CD4-positive, alpha-beta T cell (primary cell): ENCODE measurements at regions of chr4 and their contacts with region 1.

Region 1: GRCh38 chr4:47914220-47914925 is at the start of gene NFXL1:
- DNase-seq: peak; percentile 92 to 97 (median 95)
- ATAC-seq: peak; percentile 95
- H3K4me3 ChIP-seq: peak within 1 kb of the TSS; percentile 88
- H3K4me3 Mint-ChIP-seq: peak within 1 kb of the TSS; percentile 96
- H3K27ac ChIP-seq: peak within 1 kb of the TSS; percentile 62 to 67
- H3K27ac Mint-ChIP-seq: peak within 1 kb of the TSS; percentile 95
- H3K4me1 ChIP-seq: peaks cover 14% of the 10 kb centered on the region
- H3K4me1 Mint-ChIP-seq: peaks cover 47% of the 10 kb centered on the region
- H3K27me3 ChIP-seq: no peaks in the 10 kb centered on the region
- H3K27me3 Mint-ChIP-seq: no peaks in the 10 kb centered on the region
- CTCF ChIP-seq: no peak
- total RNA-seq, gene NFXL1: 9.0 to 9.9 TPM

Region 2: GRCh38 chr4:47463235-47463956 is 451.0 kb before region 1 on chr4 and contains the start of gene COMMD8:
- CTCF ChIA-PET with region 1: no interaction called
- POLR2A ChIA-PET with region 1: interaction called, 6 read pairs
- intact Hi-C with region 1: loop called in 1 of 2 experiments (anchors 2 kb)
- DNase-seq: peak; percentile 93 to 99 (median 96)
- ATAC-seq: peak; percentile 89
- H3K4me3 ChIP-seq: peak within 1 kb of the TSS; percentile 86
- H3K4me3 Mint-ChIP-seq: peak within 1 kb of the TSS; percentile 93
- H3K27ac ChIP-seq: peak within 1 kb of the TSS; percentile 43 to 63
- H3K27ac Mint-ChIP-seq: peak within 1 kb of the TSS; percentile 83
- H3K4me1 ChIP-seq: peaks cover 16% of the 10 kb centered on the region
- H3K4me1 Mint-ChIP-seq: peaks cover 51% of the 10 kb centered on the region
- H3K27me3 ChIP-seq: no peaks in the 10 kb centered on the region
- H3K27me3 Mint-ChIP-seq: no peaks in the 10 kb centered on the region
- CTCF ChIP-seq: no peak
- total RNA-seq, gene COMMD8: 4.4 to 5.4 TPM

Region 3: DNA sequence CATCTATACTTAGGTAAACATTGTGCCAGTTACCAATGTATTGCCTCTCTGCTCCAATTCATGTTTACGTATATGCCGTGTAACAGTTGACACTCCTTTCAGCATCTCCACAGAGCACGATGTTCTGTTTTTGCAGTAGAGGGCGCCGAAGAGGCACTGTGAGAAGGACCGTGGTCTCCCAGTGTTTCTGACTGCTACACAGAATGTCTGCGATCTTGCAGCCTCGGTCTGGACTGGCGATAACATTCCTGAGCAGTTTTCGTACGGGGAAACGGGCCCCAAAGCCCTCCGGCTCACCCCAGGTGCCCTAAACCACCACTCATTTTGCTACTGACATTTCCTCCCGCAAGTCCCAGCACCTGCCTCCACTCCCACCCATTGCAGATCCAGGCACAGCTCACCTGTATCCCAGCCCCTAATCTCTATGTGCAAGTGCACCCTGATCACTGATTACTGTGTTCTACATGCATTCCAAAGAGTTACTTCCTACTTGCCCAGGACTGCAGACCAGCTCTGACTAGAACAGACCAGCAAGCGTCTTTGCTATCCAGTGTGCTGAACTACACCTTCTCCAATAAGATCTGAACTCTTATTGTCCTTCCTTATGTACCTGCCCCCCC is 12.4 kb after region 1 on chr4:
- CTCF ChIA-PET with region 1: no interaction called
- POLR2A ChIA-PET with region 1: no interaction called
- intact Hi-C with region 1: no loop called
- DNase-seq: peak; percentile 22 to 72 (median 34)
- ATAC-seq: peak; percentile 98
- H3K4me3 ChIP-seq: no peak overlapping the region
- H3K4me3 Mint-ChIP-seq: peak overlapping the region; percentile 8
- H3K27ac ChIP-seq: no peak overlapping the region
- H3K27ac Mint-ChIP-seq: no peak overlapping the region
- H3K4me1 ChIP-seq: peaks cover 5% of the 10 kb centered on the region
- H3K4me1 Mint-ChIP-seq: peaks cover 13% of the 10 kb centered on the region
- H3K27me3 ChIP-seq: no peaks in the 10 kb centered on the region
- H3K27me3 Mint-ChIP-seq: peaks cover 34% of the 10 kb centered on the region
- CTCF ChIP-seq: peak; percentile 82

Region 4: DNA sequence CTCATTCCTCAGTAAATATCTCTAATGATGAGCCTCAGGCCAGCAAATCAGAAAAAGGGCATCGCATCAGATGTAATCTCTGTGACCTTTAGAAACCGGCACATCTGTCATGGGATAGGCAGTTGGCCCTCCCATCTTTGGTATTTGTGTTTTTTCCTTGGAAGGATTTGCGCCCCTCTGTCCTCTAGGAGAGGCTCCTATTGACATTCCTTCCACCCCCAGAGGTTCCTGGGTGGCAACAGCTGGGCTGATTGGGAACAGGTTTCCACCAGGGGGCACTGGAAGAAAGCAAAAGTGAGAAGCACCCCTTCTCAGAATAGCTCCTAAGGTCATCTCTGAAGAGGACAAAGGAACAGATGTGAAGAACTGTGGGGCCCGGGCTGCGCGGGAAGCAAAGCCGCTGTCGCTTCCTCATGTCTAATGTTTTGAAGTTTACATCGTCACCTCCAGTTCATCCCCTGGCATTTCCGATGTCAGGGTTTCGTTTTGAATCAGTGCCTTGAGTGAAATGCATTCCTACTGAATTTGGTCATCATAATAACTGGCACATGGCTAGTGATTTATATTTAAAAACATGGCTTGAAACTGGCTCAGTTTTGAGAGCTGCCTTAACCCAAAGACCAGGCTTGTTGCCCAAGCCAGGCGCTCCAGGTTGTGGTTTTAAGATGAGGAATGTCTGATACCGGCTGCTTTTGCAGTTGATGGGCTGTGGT is 213.5 kb after region 1 on chr4:
- CTCF ChIA-PET with region 1: no interaction called
- POLR2A ChIA-PET with region 1: no interaction called
- intact Hi-C with region 1: loop called in 1 of 2 experiments (anchors 10 kb)
- DNase-seq: peak; percentile 46 to 83 (median 66)
- ATAC-seq: peak; percentile 78
- H3K4me3 ChIP-seq: peak overlapping the region; percentile 33
- H3K4me3 Mint-ChIP-seq: peak overlapping the region; percentile 86
- H3K27ac ChIP-seq: peak overlapping the region; percentile 70 to 80
- H3K27ac Mint-ChIP-seq: peak overlapping the region; percentile 88
- H3K4me1 ChIP-seq: peaks cover 78% of the 10 kb centered on the region
- H3K4me1 Mint-ChIP-seq: peaks cover 87% of the 10 kb centered on the region
- H3K27me3 ChIP-seq: no peaks in the 10 kb centered on the region
- H3K27me3 Mint-ChIP-seq: no peaks in the 10 kb centered on the region
- CTCF ChIP-seq: peak; percentile 61

Region 5: DNA sequence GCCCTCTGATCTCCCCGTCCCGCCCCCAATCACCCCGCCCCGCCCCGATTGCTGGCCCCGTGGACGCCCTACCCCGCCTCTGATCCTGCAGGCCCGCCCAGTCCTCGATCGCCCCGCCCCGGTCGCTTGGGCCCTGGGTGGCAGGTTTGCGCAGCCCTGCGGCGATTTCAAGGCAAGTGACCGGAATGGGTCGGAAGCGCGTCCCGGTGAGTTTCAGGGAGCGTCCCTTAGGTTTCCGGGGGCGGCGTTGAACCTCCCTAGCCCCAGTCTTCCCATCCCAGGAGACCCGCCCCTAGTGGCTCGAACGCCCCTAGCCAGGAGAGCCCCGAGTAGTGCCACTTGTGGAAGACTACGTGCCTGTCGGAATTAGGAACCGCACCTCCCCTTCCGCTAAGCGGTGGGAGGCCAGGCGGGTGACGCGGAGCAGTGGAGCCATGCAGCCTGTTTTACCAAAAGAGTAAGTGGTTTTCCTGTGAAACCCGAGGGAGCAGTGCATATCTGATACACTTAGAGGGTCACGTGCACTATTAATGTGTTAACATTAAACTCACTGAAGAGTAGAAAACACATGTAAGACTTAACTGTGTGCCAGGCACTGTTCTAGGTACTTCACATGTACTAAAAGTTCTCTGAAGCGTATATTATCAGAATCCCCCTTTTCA is 355.6 kb after region 1 on chr4:
- CTCF ChIA-PET with region 1: no interaction called
- POLR2A ChIA-PET with region 1: no interaction called
- intact Hi-C with region 1: loop called in 1 of 2 experiments (anchors 5 kb)
- DNase-seq: peak; percentile 73 to 91 (median 80)
- ATAC-seq: peak; percentile 87
- H3K4me3 ChIP-seq: peak overlapping the region; percentile 87
- H3K4me3 Mint-ChIP-seq: peak overlapping the region; percentile 98
- H3K27ac ChIP-seq: peak overlapping the region in 1 of 2 donors; percentile 55
- H3K27ac Mint-ChIP-seq: peak overlapping the region; percentile 79
- H3K4me1 ChIP-seq: peaks cover 19% of the 10 kb centered on the region
- H3K4me1 Mint-ChIP-seq: peaks cover 29% of the 10 kb centered on the region
- H3K27me3 ChIP-seq: no peaks in the 10 kb centered on the region
- H3K27me3 Mint-ChIP-seq: no peaks in the 10 kb centered on the region
- CTCF ChIP-seq: peak; percentile 46

Region 6: GRCh38 chr4:48830706-48831531 is 916.5 kb after region 1 on chr4 and contains the start of gene OCIAD1:
- CTCF ChIA-PET with region 1: no interaction called
- POLR2A ChIA-PET with region 1: no interaction called
- intact Hi-C with region 1: loop called (anchors 10 kb)
- DNase-seq: peak; percentile 82 to 100 (median 91)
- ATAC-seq: peak; percentile 94
- H3K4me3 ChIP-seq: peak within 1 kb of the TSS; percentile 68
- H3K4me3 Mint-ChIP-seq: peak within 1 kb of the TSS; percentile 100
- H3K27ac ChIP-seq: peak within 1 kb of the TSS; percentile 93
- H3K27ac Mint-ChIP-seq: peak within 1 kb of the TSS; percentile 100
- H3K4me1 ChIP-seq: peaks cover 13% of the 10 kb centered on the region
- H3K4me1 Mint-ChIP-seq: peaks cover 32% of the 10 kb centered on the region
- H3K27me3 ChIP-seq: no peaks in the 10 kb centered on the region
- H3K27me3 Mint-ChIP-seq: peaks cover 10% of the 10 kb centered on the region
- CTCF ChIP-seq: no peak
- total RNA-seq, gene OCIAD1: 85.7 to 89.9 TPM